ENCODE measurements at regions of chr4 and their contacts with region 1.

Region 1: DNA sequence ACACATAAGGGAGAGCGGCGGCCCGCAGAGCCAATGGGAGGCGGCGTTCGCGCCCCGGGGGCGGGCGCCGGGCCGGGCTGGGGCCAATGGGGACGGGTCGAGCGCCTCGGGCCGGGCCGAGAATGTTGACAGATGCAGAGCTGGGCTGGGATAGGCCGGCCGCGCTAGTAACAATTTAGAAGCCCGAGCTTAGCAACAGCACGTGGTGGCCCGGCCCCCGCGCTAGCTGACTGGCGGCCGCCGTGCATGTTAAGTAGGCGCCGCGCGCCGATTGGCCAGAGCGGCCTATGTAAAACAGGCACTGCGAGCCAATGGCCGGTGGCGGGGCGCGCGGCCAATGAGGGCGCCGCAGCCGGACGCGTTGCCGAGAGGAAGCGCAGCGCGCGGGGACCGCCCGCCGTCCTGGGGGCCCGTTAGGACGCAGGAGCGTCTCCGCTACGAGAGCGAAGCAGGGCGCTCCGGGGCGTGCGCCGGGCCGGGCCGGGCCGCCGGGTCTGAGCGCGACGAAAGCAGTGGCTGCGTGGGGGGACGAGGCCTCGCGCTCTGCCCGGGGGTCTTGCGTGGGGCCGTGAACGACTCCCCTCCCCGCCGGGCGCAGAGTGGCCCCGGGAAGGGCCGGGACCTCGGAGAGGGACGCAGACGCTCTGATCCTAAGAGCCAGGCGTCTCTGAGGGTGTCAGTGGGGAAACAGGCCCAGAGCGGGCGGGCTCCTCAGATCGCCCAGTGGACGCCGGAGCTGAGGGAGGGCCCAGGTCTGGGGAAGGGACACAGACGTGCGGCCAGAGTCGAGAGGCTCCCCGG is 434 bp upstream of the MXD4 start:
- DNase-seq: peak; percentile 92 to 99 (median 97)
- ATAC-seq: peak; percentile 89
- H3K4me3 ChIP-seq: peak overlapping the region; percentile 64
- H3K4me3 Mint-ChIP-seq: peak overlapping the region; percentile 96
- H3K27ac ChIP-seq: peak overlapping the region; percentile 84 to 93
- H3K27ac Mint-ChIP-seq: peak overlapping the region; percentile 95
- H3K4me1 ChIP-seq: peaks cover 51% of the 10 kb centered on the region
- H3K4me1 Mint-ChIP-seq: no peaks in the 10 kb centered on the region
- H3K27me3 ChIP-seq: no peaks in the 10 kb centered on the region
- H3K27me3 Mint-ChIP-seq: no peaks in the 10 kb centered on the region
- CTCF ChIP-seq: no peak

Region 2: GRCh38 chr4:2008875-2009703 is 253.3 kb before region 1 on chr4 and contains the start of gene NELFA:
- CTCF ChIA-PET with region 1: no interaction called
- POLR2A ChIA-PET with region 1: interaction called, 10 read pairs
- intact Hi-C with region 1: loop called in 1 of 2 experiments (anchors 5 kb)
- DNase-seq: peak; percentile 93 to 98 (median 95)
- ATAC-seq: peak; percentile 79
- H3K4me3 ChIP-seq: peak within 1 kb of the TSS; percentile 87
- H3K4me3 Mint-ChIP-seq: peak within 1 kb of the TSS; percentile 98
- H3K27ac ChIP-seq: peak within 1 kb of the TSS; percentile 97 to 99
- H3K27ac Mint-ChIP-seq: peak within 1 kb of the TSS; percentile 95
- H3K4me1 ChIP-seq: peaks cover 31% of the 10 kb centered on the region
- H3K4me1 Mint-ChIP-seq: peaks cover 39% of the 10 kb centered on the region
- H3K27me3 ChIP-seq: no peaks in the 10 kb centered on the region
- H3K27me3 Mint-ChIP-seq: no peaks in the 10 kb centered on the region
- CTCF ChIP-seq: no peak
- total RNA-seq, gene NELFA: 39.9 to 40.1 TPM

Region 3: GRCh38 chr4:2281575-2282343 is 19.4 kb after region 1 on chr4:
- CTCF ChIA-PET with region 1: interaction called, 7 read pairs
- POLR2A ChIA-PET with region 1: interaction called, 65 read pairs
- intact Hi-C with region 1: loop called (anchors 1 to 2 kb)
- DNase-seq: peak; percentile 74 to 97 (median 84)
- ATAC-seq: peak; percentile 87
- H3K4me3 ChIP-seq: peak overlapping the region; percentile 13
- H3K4me3 Mint-ChIP-seq: peak overlapping the region; percentile 78
- H3K27ac ChIP-seq: peak overlapping the region; percentile 87 to 96
- H3K27ac Mint-ChIP-seq: peak overlapping the region; percentile 95
- H3K4me1 ChIP-seq: peaks cover 57% of the 10 kb centered on the region
- H3K4me1 Mint-ChIP-seq: peaks cover 38% of the 10 kb centered on the region
- H3K27me3 ChIP-seq: no peaks in the 10 kb centered on the region
- H3K27me3 Mint-ChIP-seq: no peaks in the 10 kb centered on the region
- CTCF ChIP-seq: peak; percentile 25

Region 4: GRCh38 chr4:2296631-2297601 is 34.6 kb after region 1 on chr4:
- CTCF ChIA-PET with region 1: no interaction called
- POLR2A ChIA-PET with region 1: interaction called, 21 read pairs
- intact Hi-C with region 1: no loop called
- DNase-seq: peak in 4 of 14 experiments; percentile 35 to 42 (median 37)
- ATAC-seq: peak; percentile 60
- H3K4me3 ChIP-seq: no peak overlapping the region
- H3K4me3 Mint-ChIP-seq: peak overlapping the region; percentile 18
- H3K27ac ChIP-seq: peak overlapping the region in 1 of 2 donors; percentile 4
- H3K27ac Mint-ChIP-seq: peak overlapping the region; percentile 83
- H3K4me1 ChIP-seq: peaks cover 34% of the 10 kb centered on the region
- H3K4me1 Mint-ChIP-seq: peaks cover 62% of the 10 kb centered on the region
- H3K27me3 ChIP-seq: no peaks in the 10 kb centered on the region
- H3K27me3 Mint-ChIP-seq: no peaks in the 10 kb centered on the region
- CTCF ChIP-seq: no peak

Region 5: GRCh38 chr4:2412885-2413716 is 150.8 kb after region 1 on chr4:
- CTCF ChIA-PET with region 1: interaction called, 7 read pairs
- POLR2A ChIA-PET with region 1: interaction called, 45 read pairs
- intact Hi-C with region 1: loop called (anchors 1 to 2 kb)
- DNase-seq: peak; percentile 63 to 98 (median 84)
- ATAC-seq: peak; percentile 73
- H3K4me3 ChIP-seq: peak overlapping the region; percentile 52
- H3K4me3 Mint-ChIP-seq: peak overlapping the region; percentile 74
- H3K27ac ChIP-seq: peak overlapping the region; percentile 81 to 96
- H3K27ac Mint-ChIP-seq: peak overlapping the region; percentile 94
- H3K4me1 ChIP-seq: peaks cover 90% of the 10 kb centered on the region
- H3K4me1 Mint-ChIP-seq: peaks cover 72% of the 10 kb centered on the region
- H3K27me3 ChIP-seq: peaks cover 6 to 9% of the 10 kb centered on the region in 2 experiments
- H3K27me3 Mint-ChIP-seq: peaks cover 4% of the 10 kb centered on the region
- CTCF ChIP-seq: no peak

Region 6: DNA sequence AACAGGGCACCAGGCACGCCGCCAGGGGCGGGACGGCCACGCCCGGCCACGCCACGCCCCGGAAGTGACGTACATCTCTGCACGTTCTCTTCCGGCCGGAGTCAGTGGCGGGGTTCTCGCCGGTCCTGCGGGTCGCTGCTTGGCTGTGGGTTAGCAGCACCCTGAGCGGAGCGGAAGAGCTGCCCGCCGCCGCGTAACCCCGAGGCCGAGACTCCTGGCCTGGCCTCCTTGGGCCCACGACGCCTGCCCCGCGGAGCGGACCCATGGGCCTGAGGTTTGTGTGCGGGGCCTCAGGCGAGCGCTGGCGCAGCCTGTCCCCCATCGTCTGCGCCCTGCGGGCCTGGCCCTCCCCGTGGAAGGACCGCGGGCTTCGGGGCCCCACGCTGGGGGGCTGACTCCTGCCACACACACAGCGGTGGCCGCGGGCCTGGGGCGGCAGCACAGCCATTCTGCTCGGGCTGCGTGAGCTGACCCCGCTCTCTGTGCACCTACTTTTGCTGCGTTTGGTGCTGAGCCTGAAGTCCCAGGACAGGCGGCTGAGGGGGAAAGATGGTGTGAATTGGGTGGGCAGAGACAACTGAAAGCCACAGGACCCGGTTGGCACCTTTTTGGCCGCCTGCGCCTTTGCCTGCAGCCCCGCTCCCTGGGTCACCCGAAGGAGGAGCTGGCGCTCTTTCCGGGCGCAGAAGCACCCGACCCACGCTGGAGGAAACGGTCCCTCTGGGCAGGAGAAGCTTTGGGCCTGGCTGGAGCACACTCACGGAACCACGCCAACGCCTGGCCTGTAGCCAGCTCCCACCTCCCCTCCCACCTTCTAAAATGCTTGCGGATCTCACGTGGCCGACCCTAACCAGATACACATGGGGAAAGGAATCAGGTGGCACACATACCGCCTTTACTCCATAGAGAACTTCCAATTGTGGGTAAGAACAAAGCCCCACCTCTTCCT is 672.7 kb after region 1 on chr4:
- CTCF ChIA-PET with region 1: no interaction called
- POLR2A ChIA-PET with region 1: no interaction called
- intact Hi-C with region 1: loop called in 1 of 2 experiments (anchors 10 kb)
- DNase-seq: peak; percentile 93 to 99 (median 96)
- ATAC-seq: peak; percentile 58
- H3K4me3 ChIP-seq: peak overlapping the region; percentile 92
- H3K4me3 Mint-ChIP-seq: peak overlapping the region; percentile 93
- H3K27ac ChIP-seq: peak overlapping the region; percentile 82 to 87
- H3K27ac Mint-ChIP-seq: peak overlapping the region; percentile 94
- H3K4me1 ChIP-seq: peaks cover 71% of the 10 kb centered on the region
- H3K4me1 Mint-ChIP-seq: peaks cover 45% of the 10 kb centered on the region
- H3K27me3 ChIP-seq: no peaks in the 10 kb centered on the region
- H3K27me3 Mint-ChIP-seq: no peaks in the 10 kb centered on the region
- CTCF ChIP-seq: no peak